Activated B cell treated with CpG ODN at 0.5 μM for 24 hours (primary cell): ENCODE measurements at regions of chr11 and their contacts with region 1.

Region 1: GRCh38 chr11:10653926-10654810 is 39.4 kb downstream of the IRAG1 start:
- DNase-seq: no peak
- ATAC-seq: peak; percentile 53
- H3K4me3 Mint-ChIP-seq: no peak overlapping the region
- H3K27ac Mint-ChIP-seq: peak overlapping the region; percentile 38
- H3K4me1 Mint-ChIP-seq: peaks cover 87% of the 10 kb centered on the region
- H3K27me3 Mint-ChIP-seq: no peaks in the 10 kb centered on the region
- CTCF ChIP-seq: no peak

Region 2: DNA sequence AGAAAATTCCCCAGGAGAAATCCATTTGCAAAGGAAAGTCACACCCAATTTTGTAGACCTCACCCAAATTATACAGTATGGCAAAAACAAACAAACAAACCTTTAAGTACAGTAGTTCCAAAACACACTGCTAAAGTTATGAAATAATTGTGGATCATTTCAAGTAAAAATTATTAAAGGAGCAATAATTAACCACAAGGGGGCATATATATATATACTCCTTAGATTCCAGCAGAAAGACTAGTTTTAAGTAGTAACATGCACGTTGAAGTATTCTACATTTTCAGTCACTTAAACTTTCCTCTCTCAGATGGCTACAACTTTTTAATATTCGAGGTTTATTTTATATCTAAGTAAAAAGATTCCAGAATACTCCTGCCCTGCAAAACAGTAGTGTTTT is 140.0 kb before region 1 on chr11:
- CTCF ChIA-PET with region 1: interaction called, 13 read pairs
- POLR2A ChIA-PET with region 1: interaction called, 3 read pairs
- intact Hi-C with region 1: loop called (anchors 1 kb)
- DNase-seq: no peak
- ATAC-seq: no peak
- H3K4me3 Mint-ChIP-seq: no peak overlapping the region
- H3K27ac Mint-ChIP-seq: no peak overlapping the region
- H3K4me1 Mint-ChIP-seq: peaks cover 16% of the 10 kb centered on the region
- H3K27me3 Mint-ChIP-seq: no peaks in the 10 kb centered on the region
- CTCF ChIP-seq: no peak

Region 3: GRCh38 chr11:10564696-10565318 is 89.4 kb before region 1 on chr11:
- CTCF ChIA-PET with region 1: interaction called, 22 read pairs
- POLR2A ChIA-PET with region 1: interaction called, 5 read pairs
- intact Hi-C with region 1: loop called (anchors 1 kb)
- DNase-seq: no peak
- ATAC-seq: peak; percentile 31
- H3K4me3 Mint-ChIP-seq: no peak overlapping the region
- H3K27ac Mint-ChIP-seq: peak overlapping the region; percentile 38
- H3K4me1 Mint-ChIP-seq: peaks cover 44% of the 10 kb centered on the region
- H3K27me3 Mint-ChIP-seq: no peaks in the 10 kb centered on the region
- CTCF ChIP-seq: no peak

Region 4: DNA sequence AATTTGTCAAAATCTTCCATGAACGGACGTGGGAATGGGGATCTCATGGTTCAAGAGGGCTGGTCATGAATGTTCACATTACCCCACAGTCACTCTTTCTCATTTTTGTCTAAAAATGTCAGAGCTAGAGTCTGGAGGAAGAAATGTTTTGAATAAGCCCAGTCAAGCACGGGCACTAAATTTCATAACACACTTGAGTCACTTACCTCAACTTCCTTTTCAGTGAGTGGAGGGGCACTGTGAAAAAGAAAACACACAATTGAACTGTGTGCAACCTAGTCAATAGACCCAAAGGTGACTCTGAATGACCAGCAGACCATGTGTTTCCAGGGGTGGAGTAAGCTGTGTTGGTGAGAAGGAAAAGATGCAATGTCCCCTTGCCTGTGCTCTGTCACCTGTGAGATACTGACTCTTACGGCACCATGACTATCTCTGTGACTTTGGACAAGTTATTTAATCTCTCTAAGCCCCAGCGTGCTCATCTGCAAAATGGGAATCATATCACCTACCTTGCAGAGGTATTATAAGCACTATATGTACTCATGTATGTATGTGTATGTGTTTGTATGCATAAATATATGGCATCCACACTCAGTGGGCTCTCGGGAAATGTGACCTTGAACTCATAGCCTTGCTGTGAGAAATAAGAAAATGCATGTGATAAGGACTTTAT is 47.5 kb before region 1 on chr11:
- CTCF ChIA-PET with region 1: interaction called, 5 read pairs
- POLR2A ChIA-PET with region 1: interaction called, 4 read pairs
- intact Hi-C with region 1: loop called (anchors 5 kb)
- DNase-seq: no peak
- ATAC-seq: peak; percentile 84
- H3K4me3 Mint-ChIP-seq: peak overlapping the region; percentile 73
- H3K27ac Mint-ChIP-seq: peak overlapping the region; percentile 90
- H3K4me1 Mint-ChIP-seq: peaks cover 99% of the 10 kb centered on the region
- H3K27me3 Mint-ChIP-seq: no peaks in the 10 kb centered on the region
- CTCF ChIP-seq: no peak